Activated naive CD4-positive, alpha-beta T cell treated with anti-CD3 and anti-CD28 coated beads for 36 hours (primary cell): ENCODE measurements at regions of chr4 and their contacts with region 1.

Region 1: GRCh38 chr4:54322818-54323417 is 93.8 kb downstream of the PDGFRA start:
- DNase-seq: peak; percentile 78
- H3K4me3 Mint-ChIP-seq: no peak overlapping the region
- H3K27ac Mint-ChIP-seq: no peak overlapping the region
- H3K4me1 Mint-ChIP-seq: no peaks in the 10 kb centered on the region
- H3K27me3 Mint-ChIP-seq: no peaks in the 10 kb centered on the region

Region 2: DNA sequence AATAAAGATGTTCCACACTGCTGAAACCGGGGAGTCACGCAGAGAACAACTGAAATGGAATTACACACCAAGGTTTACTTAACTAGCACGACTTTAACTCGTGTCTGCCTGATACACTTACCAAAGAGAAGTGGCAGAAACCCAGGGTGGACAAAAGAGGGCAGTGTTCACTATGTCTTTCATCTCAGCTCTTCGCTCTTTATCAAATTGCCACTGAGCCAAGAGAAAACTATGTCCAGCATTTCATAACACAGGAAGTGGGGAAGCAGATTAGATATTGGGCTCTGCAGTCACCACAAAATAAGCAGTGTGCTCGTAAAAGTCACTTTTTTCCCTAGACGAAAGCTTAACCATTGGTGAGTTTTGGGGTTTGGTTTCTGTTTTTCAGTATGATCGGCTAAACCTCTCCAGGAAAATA is 414.2 kb before region 1 on chr4:
- CTCF ChIA-PET with region 1: no interaction called
- intact Hi-C with region 1: no loop called
- DNase-seq: peak; percentile 23
- H3K4me3 Mint-ChIP-seq: no peak overlapping the region
- H3K27ac Mint-ChIP-seq: no peak overlapping the region
- H3K4me1 Mint-ChIP-seq: peaks cover 12% of the 10 kb centered on the region
- H3K27me3 Mint-ChIP-seq: peaks cover 46% of the 10 kb centered on the region

Region 3: GRCh38 chr4:54433686-54434085 is 110.8 kb after region 1 on chr4:
- CTCF ChIA-PET with region 1: interaction called, 4 read pairs
- intact Hi-C with region 1: loop called (anchors 2 kb)
- DNase-seq: no peak
- H3K4me3 Mint-ChIP-seq: no peak overlapping the region
- H3K27ac Mint-ChIP-seq: no peak overlapping the region
- H3K4me1 Mint-ChIP-seq: no peaks in the 10 kb centered on the region
- H3K27me3 Mint-ChIP-seq: peaks cover 32% of the 10 kb centered on the region

Region 4: GRCh38 chr4:54440394-54441136 is 117.6 kb after region 1 on chr4:
- CTCF ChIA-PET with region 1: interaction called, 11 read pairs
- intact Hi-C with region 1: loop called (anchors 1 kb)
- DNase-seq: peak; percentile 30
- H3K4me3 Mint-ChIP-seq: no peak overlapping the region
- H3K27ac Mint-ChIP-seq: no peak overlapping the region
- H3K4me1 Mint-ChIP-seq: no peaks in the 10 kb centered on the region
- H3K27me3 Mint-ChIP-seq: peaks cover 28% of the 10 kb centered on the region

Region 5: GRCh38 chr4:54645830-54646229 is 322.9 kb after region 1 on chr4:
- CTCF ChIA-PET with region 1: no interaction called
- intact Hi-C with region 1: no loop called
- DNase-seq: no peak
- H3K4me3 Mint-ChIP-seq: no peak overlapping the region
- H3K27ac Mint-ChIP-seq: no peak overlapping the region
- H3K4me1 Mint-ChIP-seq: no peaks in the 10 kb centered on the region
- H3K27me3 Mint-ChIP-seq: peaks cover 2% of the 10 kb centered on the region

Region 6: DNA sequence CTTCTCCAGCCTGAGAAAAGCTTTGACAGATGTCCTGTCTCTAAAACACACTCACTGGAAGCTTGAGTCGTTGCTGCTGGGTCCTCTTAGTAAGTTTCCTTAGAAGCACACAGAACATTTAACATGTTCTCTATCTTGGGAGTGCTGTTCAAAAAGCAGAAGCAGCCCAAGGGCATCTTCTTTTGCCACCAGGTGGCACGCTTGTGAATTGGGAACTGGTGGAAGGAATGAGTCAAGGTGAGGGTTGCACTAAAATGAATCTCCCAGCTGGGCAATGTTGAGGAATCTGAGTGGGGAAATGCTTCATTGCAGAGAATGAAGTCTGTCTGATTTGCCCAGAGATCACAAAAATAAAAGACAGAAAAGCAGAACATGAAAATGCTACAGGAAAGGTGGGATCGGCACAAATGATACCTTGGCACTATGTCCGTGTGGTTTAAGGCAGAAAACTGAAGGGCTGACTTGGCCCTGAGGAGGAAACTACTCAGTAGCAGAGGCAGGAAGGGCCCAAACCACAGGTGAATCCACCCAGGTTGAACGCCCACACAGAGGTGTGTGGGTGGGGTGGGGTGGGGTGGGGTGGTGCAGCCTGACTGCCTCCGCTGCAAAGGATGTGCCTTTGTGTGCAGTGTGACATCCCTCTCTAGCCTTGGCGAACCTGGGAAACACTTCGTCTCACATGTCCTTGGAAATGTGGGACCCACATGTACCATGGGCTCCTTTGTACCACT is 360.9 kb after region 1 on chr4:
- CTCF ChIA-PET with region 1: no interaction called
- intact Hi-C with region 1: loop called (anchors 1 kb)
- DNase-seq: peak; percentile 81
- H3K4me3 Mint-ChIP-seq: no peak overlapping the region
- H3K27ac Mint-ChIP-seq: no peak overlapping the region
- H3K4me1 Mint-ChIP-seq: peaks cover 20% of the 10 kb centered on the region
- H3K27me3 Mint-ChIP-seq: no peaks in the 10 kb centered on the region

Region 7: DNA sequence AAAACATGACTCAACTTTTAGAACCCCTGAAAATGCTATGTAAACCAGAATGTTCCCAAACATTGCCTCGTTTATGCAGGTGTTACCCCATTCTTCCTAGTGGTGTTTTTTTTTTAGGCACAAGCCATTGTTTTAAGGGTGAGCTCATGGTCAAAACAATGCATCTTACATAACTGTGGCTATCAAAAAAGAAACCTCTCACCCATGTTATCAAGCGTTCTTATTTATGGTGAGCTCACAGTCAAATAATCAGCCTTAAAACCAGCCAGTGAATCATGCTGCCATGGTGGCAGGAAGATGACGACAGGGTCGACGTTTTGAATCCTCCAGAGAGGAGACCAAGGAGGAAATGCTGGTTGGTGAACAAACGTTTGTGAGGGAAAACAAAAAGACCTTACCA is 607.3 kb after region 1 on chr4:
- CTCF ChIA-PET with region 1: no interaction called
- intact Hi-C with region 1: no loop called
- DNase-seq: peak; percentile 10
- H3K4me3 Mint-ChIP-seq: no peak overlapping the region
- H3K27ac Mint-ChIP-seq: no peak overlapping the region
- H3K4me1 Mint-ChIP-seq: peaks cover 5% of the 10 kb centered on the region
- H3K27me3 Mint-ChIP-seq: no peaks in the 10 kb centered on the region

Region 8: DNA sequence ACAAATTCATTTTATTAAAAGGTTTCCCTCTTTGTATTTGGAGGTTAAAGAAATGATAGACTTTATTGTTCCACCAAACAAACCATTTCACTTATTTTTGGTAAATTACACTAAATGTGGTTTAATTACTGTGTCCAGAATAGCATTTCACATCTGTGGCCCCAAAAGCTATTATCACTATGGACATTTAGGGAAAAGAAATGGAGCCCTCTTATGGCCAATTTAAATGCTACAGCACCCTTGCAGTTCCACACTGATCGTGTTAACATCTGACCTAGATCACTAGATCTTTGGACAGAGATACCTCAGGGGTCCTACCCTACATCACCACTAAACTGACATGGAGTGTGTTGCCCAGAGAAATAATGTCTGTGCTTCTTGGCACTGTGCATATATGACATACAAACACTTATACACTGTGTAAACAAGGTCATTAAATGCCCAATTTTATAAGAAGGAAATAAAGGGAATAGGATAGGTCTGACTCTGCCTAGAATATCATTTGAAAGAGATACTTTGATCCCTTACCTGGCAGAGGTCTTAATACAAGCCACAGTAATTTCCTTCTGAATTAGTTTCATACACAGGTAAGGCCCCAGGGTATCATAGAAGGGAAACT is 638.5 kb after region 1 on chr4:
- CTCF ChIA-PET with region 1: interaction called, 7 read pairs
- intact Hi-C with region 1: loop called (anchors 1 kb)
- DNase-seq: peak; percentile 15
- H3K4me3 Mint-ChIP-seq: no peak overlapping the region
- H3K27ac Mint-ChIP-seq: no peak overlapping the region
- H3K4me1 Mint-ChIP-seq: peaks cover 26% of the 10 kb centered on the region
- H3K27me3 Mint-ChIP-seq: no peaks in the 10 kb centered on the region